Ovary (tissue), 10 donors: ENCODE measurements at regions of chr19 and their contacts with region 1.

Region 1: GRCh38 chr19:39328046-39328705 is 7.5 kb upstream of the LRFN1 start:
- DNase-seq: peak; percentile 76 to 92 (median 90)
- H3K4me3 ChIP-seq: no peak overlapping the region
- H3K27ac ChIP-seq: no peak overlapping the region
- H3K4me1 ChIP-seq: no peaks in the 10 kb centered on the region
- H3K27me3 ChIP-seq: no peaks in the 10 kb centered on the region
- CTCF ChIP-seq: peak; percentile 82 to 89 (median 83)
- EP300 ChIP-seq: no peak
- POLR2A ChIP-seq: no peak

Region 2: DNA sequence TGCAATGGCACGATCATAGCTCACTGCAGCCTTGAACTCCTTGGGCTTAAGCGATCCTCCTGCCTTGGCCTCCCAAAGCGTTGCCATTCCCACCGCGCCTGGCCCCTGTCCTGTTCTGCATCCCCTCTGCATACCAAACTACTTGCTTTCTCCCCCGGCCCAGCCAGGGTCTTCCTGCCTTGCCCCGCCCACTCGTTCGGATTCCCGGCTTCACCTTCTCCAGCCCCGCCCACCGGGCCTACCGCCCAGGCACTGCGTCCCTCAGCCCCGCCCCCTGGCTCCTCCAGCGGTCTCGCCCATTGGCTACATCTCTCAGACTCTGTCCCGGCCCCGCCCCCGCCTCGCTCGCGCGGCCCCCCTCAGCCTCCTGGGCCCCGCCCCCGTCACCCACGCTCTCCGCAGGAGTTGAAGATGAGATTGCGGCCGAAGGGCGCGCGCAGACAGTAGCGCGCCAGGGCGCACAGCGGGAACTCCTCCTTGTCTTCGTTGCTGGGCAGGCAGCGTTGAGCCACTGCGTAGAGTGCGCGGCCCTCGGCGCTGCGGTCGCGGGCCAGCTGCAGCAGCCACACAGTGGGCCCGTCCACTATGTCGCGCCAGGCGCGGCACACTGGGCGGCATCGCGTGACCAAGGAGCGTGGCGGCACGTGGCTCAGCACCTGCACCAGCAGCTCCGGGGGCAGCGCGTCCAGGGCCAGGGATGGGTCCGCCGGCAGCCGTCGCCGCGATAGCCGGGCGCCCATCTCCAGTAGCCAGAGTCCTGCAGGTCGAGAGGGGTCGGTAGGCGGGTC is 378.4 kb before region 1 on chr19:
- intact Hi-C with region 1: loop called in 1 of 4 experiments (anchors 10 kb)
- DNase-seq: peak; percentile 92 to 97 (median 94)
- H3K4me3 ChIP-seq: peak overlapping the region; percentile 22
- H3K27ac ChIP-seq: no peak overlapping the region
- H3K4me1 ChIP-seq: peaks cover 6% of the 10 kb centered on the region
- H3K27me3 ChIP-seq: no peaks in the 10 kb centered on the region
- CTCF ChIP-seq: no peak
- EP300 ChIP-seq: no peak
- POLR2A ChIP-seq: no peak

Region 3: GRCh38 chr19:38964738-38965137 is 363.4 kb before region 1 on chr19:
- intact Hi-C with region 1: loop called in 2 of 4 experiments (anchors 10 kb)
- DNase-seq: no peak
- H3K4me3 ChIP-seq: no peak overlapping the region
- H3K27ac ChIP-seq: no peak overlapping the region
- H3K4me1 ChIP-seq: peaks cover 3% of the 10 kb centered on the region
- H3K27me3 ChIP-seq: no peaks in the 10 kb centered on the region
- CTCF ChIP-seq: no peak
- EP300 ChIP-seq: no peak
- POLR2A ChIP-seq: no peak

Region 4: DNA sequence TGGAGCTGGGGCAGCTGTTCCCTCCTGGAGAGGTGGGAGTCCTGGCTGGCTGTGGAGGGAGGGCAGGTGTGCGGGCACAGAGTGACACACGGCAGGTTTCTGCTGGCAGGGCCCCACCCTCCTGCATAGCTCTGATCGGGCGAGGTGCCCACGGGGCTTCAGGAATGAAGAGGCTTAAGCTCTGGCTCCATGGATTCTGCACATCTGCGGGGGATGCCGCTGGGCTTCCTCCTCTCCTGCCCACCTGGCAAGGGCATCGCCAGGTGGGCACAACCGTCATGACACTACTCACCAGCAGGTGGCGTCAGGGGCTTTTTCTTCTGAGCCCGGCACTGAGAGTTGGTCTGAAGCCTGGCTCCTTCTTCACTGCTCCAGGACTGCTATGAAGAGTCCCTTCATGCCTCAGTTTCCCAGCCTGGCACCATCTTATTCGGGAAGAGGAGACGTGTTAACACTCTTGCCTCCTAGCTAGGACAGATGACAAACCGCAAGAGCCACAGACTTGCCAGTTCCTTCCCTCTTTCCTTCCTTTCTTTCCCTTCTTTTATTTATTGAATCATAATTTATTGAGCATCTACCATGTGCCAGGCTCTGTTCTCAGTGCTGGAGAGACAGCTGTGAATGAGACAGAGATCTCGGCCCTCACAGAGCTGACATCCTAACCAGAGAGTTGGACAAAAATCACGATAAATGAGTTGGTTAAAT is 217.8 kb before region 1 on chr19:
- intact Hi-C with region 1: loop called in 1 of 4 experiments (anchors 2 kb)
- DNase-seq: peak in 4 of 5 donors; percentile 32 to 61 (median 54)
- H3K4me3 ChIP-seq: no peak overlapping the region
- H3K27ac ChIP-seq: no peak overlapping the region
- H3K4me1 ChIP-seq: no peaks in the 10 kb centered on the region
- H3K27me3 ChIP-seq: no peaks in the 10 kb centered on the region
- CTCF ChIP-seq: peak; percentile 24 to 52 (median 40)
- EP300 ChIP-seq: no peak
- POLR2A ChIP-seq: no peak

Region 5: DNA sequence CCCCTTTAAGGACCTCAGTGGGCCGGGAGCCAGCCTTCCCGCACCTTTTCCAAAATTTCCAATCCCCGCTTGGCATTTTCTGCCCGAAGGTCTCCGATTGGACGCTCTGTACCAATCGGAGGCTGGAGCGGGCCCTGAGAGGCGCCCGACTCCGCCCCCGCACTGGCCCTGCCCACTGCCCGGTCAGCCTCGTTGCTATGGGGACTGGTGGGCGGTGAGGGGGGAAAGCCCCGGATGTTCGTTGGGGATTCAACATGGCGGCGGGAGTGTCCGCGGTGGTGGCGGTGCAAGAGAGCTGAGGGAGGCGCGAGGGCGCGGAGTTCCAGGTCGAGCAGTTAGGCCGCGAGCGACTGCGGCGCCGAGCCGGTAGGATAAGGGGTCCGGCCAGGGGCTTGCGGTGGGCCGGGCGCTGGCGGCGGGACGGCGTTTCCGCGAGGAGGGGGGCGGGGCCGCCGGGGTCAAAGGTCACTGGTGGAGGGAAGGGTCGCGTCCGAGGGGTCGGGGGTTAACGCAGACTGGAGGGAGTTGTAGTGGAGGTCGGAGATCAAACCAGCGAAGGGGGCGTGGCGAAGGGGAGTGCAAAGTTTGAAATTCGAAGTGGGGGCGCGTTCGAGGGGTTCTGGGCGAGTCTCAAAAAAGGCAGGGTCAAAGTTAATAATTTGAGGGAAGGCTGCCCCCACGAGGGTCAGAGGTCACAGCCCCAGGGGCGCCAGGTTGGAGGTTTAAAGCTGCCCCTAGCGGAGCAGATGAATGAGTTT is 202.4 kb before region 1 on chr19 and contains the start of gene PAK4:
- intact Hi-C with region 1: loop called in 3 of 4 experiments (anchors 1 to 5 kb)
- DNase-seq: peak; percentile 98 to 99 (median 98)
- H3K4me3 ChIP-seq: peak within 1 kb of the TSS; percentile 86
- H3K27ac ChIP-seq: peak within 1 kb of the TSS; percentile 62 to 78
- H3K4me1 ChIP-seq: peaks cover 10% of the 10 kb centered on the region
- H3K27me3 ChIP-seq: no peaks in the 10 kb centered on the region
- CTCF ChIP-seq: peak in 1 of 3 donors; percentile 9
- EP300 ChIP-seq: no peak
- POLR2A ChIP-seq: peak; percentile 54
- total RNA-seq, gene PAK4: 10.4 to 62.2 (median 35.4) TPM